CD4-positive, alpha-beta T cell (primary cell): ENCODE measurements at regions of chr19 and their contacts with region 1.

Region 1: GRCh38 chr19:32570081-32570785 is 10.8 kb upstream of the PDCD5 start:
- DNase-seq: peak; percentile 14 to 79 (median 45)
- ATAC-seq: peak; percentile 78
- H3K4me3 ChIP-seq: no peak overlapping the region
- H3K4me3 Mint-ChIP-seq: peak overlapping the region; percentile 57
- H3K27ac ChIP-seq: no peak overlapping the region
- H3K27ac Mint-ChIP-seq: no peak overlapping the region
- H3K4me1 ChIP-seq: peaks cover 10% of the 10 kb centered on the region
- H3K4me1 Mint-ChIP-seq: peaks cover 20% of the 10 kb centered on the region
- H3K27me3 ChIP-seq: peaks cover 4 to 13% of the 10 kb centered on the region in 2 experiments
- H3K27me3 Mint-ChIP-seq: peaks cover 22% of the 10 kb centered on the region
- CTCF ChIP-seq: peak; percentile 66

Region 2: DNA sequence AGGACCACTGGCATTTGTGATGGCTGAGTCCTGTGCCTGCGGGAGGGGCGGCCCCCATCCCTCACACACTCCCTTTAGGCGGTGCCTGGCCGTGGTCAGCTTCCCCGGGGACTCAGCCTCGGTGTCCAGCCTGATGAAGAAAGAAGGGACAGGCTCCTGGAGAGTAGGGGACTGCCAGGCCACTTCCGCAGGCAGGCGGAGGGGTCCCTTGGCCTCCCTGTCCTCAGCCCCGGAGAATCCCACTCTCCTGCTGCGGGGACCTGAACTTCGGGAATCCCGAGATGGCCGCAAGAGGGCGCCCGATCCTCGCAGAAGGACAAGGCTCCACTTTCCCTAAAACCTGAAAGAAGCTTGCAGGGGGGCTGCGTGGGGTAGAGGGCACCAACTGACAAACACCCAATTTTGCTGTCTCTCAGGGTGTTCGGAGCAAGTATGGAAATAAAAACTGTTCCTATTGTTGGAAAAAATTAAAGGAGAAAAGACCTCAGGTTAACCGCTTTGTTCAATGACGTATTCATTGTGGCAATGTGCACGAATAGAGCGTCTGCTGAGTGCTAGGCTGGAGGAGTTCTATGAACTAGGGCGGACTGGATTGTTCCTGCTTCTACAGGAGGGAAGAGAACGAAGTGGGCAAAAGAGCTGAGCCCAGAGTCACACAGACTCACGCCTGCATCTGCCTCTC is 1900.8 kb before region 1 on chr19:
- CTCF ChIA-PET with region 1: no interaction called
- POLR2A ChIA-PET with region 1: no interaction called
- intact Hi-C with region 1: loop called in 1 of 2 experiments (anchors 5 kb)
- DNase-seq: peak; percentile 15 to 56 (median 26)
- ATAC-seq: no peak
- H3K4me3 ChIP-seq: no peak overlapping the region
- H3K4me3 Mint-ChIP-seq: no peak overlapping the region
- H3K27ac ChIP-seq: no peak overlapping the region
- H3K27ac Mint-ChIP-seq: no peak overlapping the region
- H3K4me1 ChIP-seq: peaks cover 2% of the 10 kb centered on the region
- H3K4me1 Mint-ChIP-seq: no peaks in the 10 kb centered on the region
- H3K27me3 ChIP-seq: peaks cover 22% of the 10 kb centered on the region in 2 experiments
- H3K27me3 Mint-ChIP-seq: peaks cover 55% of the 10 kb centered on the region
- CTCF ChIP-seq: peak; percentile 68

Region 3: DNA sequence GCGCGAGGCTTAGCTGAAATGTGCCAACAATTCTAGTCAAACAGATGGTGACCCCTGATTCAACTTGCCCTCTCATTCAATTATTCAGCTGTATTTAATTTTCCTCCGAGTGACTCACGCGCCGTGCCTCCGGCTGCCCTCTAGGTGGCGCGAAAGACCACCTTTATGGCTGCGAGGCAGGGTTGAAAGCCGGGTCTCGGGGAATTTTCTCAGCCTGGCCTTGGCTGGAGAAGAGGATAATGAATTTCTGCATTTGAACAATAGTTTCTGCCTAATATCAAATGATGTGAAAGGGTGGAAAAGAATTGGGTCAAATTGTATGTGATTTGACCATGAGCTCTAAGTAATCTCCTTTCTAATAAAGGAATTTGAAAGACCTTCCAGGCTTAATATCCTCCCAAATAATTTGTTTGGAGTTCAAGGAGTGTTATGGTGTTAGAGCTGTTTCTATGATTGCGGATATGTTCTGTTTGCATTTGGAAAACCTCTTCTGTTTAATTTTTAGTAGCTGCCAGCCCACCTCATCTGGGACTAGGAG is 1887.2 kb before region 1 on chr19:
- CTCF ChIA-PET with region 1: no interaction called
- POLR2A ChIA-PET with region 1: no interaction called
- intact Hi-C with region 1: loop called (anchors 5 kb)
- DNase-seq: peak; percentile 17 to 62 (median 30)
- ATAC-seq: peak; percentile 46
- H3K4me3 ChIP-seq: no peak overlapping the region
- H3K4me3 Mint-ChIP-seq: no peak overlapping the region
- H3K27ac ChIP-seq: no peak overlapping the region
- H3K27ac Mint-ChIP-seq: no peak overlapping the region
- H3K4me1 ChIP-seq: no peaks in the 10 kb centered on the region
- H3K4me1 Mint-ChIP-seq: no peaks in the 10 kb centered on the region
- H3K27me3 ChIP-seq: peaks cover 2 to 14% of the 10 kb centered on the region in 2 experiments
- H3K27me3 Mint-ChIP-seq: peaks cover 50% of the 10 kb centered on the region
- CTCF ChIP-seq: peak; percentile 82

Region 4: DNA sequence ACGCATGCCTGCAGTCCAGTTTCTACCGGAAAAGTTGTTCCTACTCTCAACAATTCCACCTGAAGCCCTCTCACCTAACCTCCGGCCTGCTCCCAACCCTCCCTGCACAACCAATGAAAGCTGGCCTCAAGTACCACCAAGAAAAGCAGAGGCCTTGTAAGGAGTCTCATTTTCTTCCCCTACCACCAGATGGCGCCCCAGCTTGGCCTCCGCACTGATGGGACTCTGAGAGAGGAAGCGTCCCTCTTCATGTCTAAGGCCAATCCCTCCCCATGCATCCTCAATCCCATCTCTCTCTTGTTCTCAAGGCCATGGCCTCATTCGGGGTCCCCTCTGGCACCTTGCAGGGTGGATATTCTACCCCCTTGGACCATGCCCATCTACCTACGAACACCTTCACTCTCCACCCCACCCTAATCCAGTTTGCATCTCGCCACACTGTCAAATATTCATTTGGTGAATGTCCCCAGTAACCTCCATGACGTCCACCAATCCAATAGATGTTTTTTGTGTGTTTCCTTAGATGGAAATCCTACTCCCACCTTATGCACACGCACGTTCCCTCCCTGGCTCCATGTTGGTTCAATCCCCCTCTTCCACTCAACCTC is 1785.3 kb before region 1 on chr19:
- CTCF ChIA-PET with region 1: no interaction called
- POLR2A ChIA-PET with region 1: no interaction called
- intact Hi-C with region 1: loop called in 1 of 2 experiments (anchors 5 kb)
- DNase-seq: peak; percentile 26 to 72 (median 48)
- ATAC-seq: no peak
- H3K4me3 ChIP-seq: no peak overlapping the region
- H3K4me3 Mint-ChIP-seq: no peak overlapping the region
- H3K27ac ChIP-seq: no peak overlapping the region
- H3K27ac Mint-ChIP-seq: no peak overlapping the region
- H3K4me1 ChIP-seq: no peaks in the 10 kb centered on the region
- H3K4me1 Mint-ChIP-seq: no peaks in the 10 kb centered on the region
- H3K27me3 ChIP-seq: no peaks in the 10 kb centered on the region
- H3K27me3 Mint-ChIP-seq: peaks cover 31% of the 10 kb centered on the region
- CTCF ChIP-seq: peak; percentile 63

Region 5: GRCh38 chr19:32339988-32340874 is 230.0 kb before region 1 on chr19:
- CTCF ChIA-PET with region 1: no interaction called
- POLR2A ChIA-PET with region 1: interaction called, 3 read pairs
- intact Hi-C with region 1: loop called (anchors 1 kb)
- DNase-seq: peak; percentile 14 to 63 (median 36)
- ATAC-seq: peak; percentile 61
- H3K4me3 ChIP-seq: no peak overlapping the region
- H3K4me3 Mint-ChIP-seq: no peak overlapping the region
- H3K27ac ChIP-seq: no peak overlapping the region
- H3K27ac Mint-ChIP-seq: no peak overlapping the region
- H3K4me1 ChIP-seq: peaks cover 6% of the 10 kb centered on the region
- H3K4me1 Mint-ChIP-seq: peaks cover 3% of the 10 kb centered on the region
- H3K27me3 ChIP-seq: no peaks in the 10 kb centered on the region
- H3K27me3 Mint-ChIP-seq: peaks cover 5% of the 10 kb centered on the region
- CTCF ChIP-seq: peak; percentile 75

Region 6: GRCh38 chr19:32464279-32464678 is 106.0 kb before region 1 on chr19:
- CTCF ChIA-PET with region 1: interaction called, 3 read pairs
- POLR2A ChIA-PET with region 1: interaction called, 3 read pairs
- intact Hi-C with region 1: loop called (anchors 1 to 5 kb)
- DNase-seq: peak in 2 of 14 experiments; percentile 5 to 27
- ATAC-seq: no peak
- H3K4me3 ChIP-seq: no peak overlapping the region
- H3K4me3 Mint-ChIP-seq: no peak overlapping the region
- H3K27ac ChIP-seq: no peak overlapping the region
- H3K27ac Mint-ChIP-seq: no peak overlapping the region
- H3K4me1 ChIP-seq: no peaks in the 10 kb centered on the region
- H3K4me1 Mint-ChIP-seq: no peaks in the 10 kb centered on the region
- H3K27me3 ChIP-seq: no peaks in the 10 kb centered on the region
- H3K27me3 Mint-ChIP-seq: no peaks in the 10 kb centered on the region
- CTCF ChIP-seq: peak; percentile 48